Naive thymus-derived CD8-positive, alpha-beta T cell (primary cell): ENCODE measurements at regions of chr4 and their contacts with region 1.

Region 1: GRCh38 chr4:109559983-109560686 is at the start of gene MCUB:
- DNase-seq: peak; percentile 84 to 96 (median 92)
- ATAC-seq: peak; percentile 88 to 95
- H3K4me3 Mint-ChIP-seq: peak within 1 kb of the TSS; percentile 84 to 99 (median 98)
- H3K27ac Mint-ChIP-seq: peak within 1 kb of the TSS; percentile 94 to 99 (median 97)
- H3K4me1 Mint-ChIP-seq: peaks cover 12 to 62% (median 58%) of the 10 kb centered on the region in 4 donors
- H3K27me3 Mint-ChIP-seq: no peaks in the 10 kb centered on the region
- polyA plus RNA-seq, gene MCUB: 160 to 201 (median 197) TPM

Region 2: DNA sequence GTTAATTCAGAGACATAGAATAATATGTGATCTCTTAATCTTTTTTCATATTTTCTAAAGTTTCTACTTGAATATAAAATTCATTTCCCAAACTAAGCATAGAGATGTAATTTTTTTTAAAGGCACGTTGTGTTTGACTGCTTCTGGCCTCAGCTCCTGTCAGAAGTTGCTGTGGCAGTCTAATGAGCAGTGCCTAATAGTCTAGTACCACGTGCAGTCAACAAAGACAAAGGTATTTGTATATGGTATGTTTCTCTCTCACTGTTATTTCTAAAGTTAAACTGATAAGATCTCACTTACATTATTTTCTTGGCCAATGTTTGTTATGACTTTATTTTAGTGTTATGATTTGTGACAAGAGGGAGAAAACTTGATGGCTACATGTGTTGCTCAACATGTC is 48.7 kb before region 1 on chr4:
- POLR2A ChIA-PET with region 1: interaction called, 11 read pairs
- DNase-seq: no peak
- ATAC-seq: no peak
- H3K4me3 Mint-ChIP-seq: no peak overlapping the region
- H3K27ac Mint-ChIP-seq: no peak overlapping the region
- H3K4me1 Mint-ChIP-seq: no peaks in the 10 kb centered on the region
- H3K27me3 Mint-ChIP-seq: no peaks in the 10 kb centered on the region

Region 3: GRCh38 chr4:109574102-109574850 is 14.1 kb after region 1 on chr4:
- POLR2A ChIA-PET with region 1: interaction called, 15 read pairs
- DNase-seq: peak in 3 of 10 donors; percentile 32 to 48 (median 32)
- ATAC-seq: peak; percentile 73 to 77
- H3K4me3 Mint-ChIP-seq: peak overlapping the region in 9 of 10 donors; percentile 3 to 78 (median 62)
- H3K27ac Mint-ChIP-seq: peak overlapping the region; percentile 42 to 90 (median 73)
- H3K4me1 Mint-ChIP-seq: peaks cover 39 to 79% (median 74%) of the 10 kb centered on the region in 4 donors
- H3K27me3 Mint-ChIP-seq: no peaks in the 10 kb centered on the region

Region 4: DNA sequence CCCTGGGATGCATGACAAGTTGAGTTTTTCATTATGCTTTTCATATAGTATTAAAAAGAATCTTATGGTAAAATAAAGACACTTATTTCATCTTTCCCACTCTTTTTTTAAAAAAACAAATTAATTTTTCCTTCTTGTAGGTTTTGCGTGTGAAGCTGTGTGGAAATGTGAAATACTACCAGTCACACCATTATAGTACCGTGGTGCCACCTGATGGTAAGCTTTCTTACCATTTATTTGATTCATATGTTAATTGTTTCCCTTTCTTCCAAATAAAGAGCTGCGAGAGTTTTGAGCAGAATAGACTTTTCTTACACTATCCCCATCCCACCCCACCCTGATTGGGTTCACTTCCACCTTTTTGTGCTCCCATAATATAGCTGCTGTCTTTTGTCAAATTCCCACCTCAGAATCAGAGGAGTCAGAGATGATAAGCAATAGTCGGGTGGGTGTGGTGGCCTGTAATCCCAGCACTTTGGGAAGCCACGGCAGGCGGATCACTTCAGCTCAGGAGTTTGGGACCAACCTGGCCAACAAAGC is 98.8 kb after region 1 on chr4:
- POLR2A ChIA-PET with region 1: interaction called, 14 read pairs
- DNase-seq: peak in 3 of 10 donors; percentile 24 to 39 (median 37)
- ATAC-seq: peak in 1 of 2 donors; percentile 43
- H3K4me3 Mint-ChIP-seq: peak overlapping the region in 2 of 10 donors; percentile 27 to 34
- H3K27ac Mint-ChIP-seq: peak overlapping the region in 8 of 10 donors; percentile 66 to 91 (median 82)
- H3K4me1 Mint-ChIP-seq: peaks cover 5 to 67% (median 32%) of the 10 kb centered on the region in 4 donors
- H3K27me3 Mint-ChIP-seq: no peaks in the 10 kb centered on the region

Region 5: DNA sequence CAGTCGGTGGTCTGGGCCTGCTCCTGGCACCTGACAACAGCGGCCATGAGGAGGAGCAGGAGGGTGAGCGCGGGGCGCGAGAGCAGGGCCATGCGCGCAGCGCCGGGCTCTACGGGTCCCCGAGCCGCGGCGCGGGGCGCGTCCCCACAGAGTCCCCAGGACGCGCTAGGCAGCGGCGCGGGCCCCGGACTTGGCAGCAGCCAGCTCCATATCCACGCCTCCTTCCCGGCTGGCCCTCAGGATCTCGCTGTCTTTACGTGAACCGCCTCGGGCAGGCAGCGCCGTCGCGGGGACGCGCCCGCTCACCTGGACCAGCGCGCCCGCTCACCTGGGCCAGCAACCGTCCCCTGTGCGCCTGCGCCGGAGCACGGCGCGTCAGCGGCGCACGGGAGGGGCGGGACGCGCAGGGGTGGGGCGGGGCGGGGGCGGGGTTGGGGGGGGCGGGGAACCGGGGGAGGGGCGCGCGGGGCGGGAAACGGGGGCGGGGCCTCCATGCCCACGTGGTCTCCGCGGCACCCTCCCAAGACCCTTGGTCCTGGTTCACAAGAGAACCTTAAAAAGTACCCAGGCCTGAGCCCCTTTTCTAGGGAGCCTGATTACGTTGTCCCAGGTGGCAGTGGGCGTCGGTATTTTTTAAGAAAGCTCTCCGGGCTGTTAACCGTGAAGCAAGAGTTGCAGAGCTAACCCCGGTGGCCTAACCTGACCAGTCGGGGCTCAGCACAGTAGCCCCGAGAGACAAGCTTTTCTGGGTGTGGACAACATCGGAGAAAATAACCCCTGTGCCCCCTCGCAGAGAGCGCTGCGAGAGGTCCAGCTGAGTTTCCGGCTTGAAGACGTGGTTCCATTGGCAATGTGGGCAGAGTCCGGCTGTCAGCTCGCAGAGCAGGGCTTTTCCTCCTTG is 169.8 kb after region 1 on chr4 and contains the start of gene PLA2G12A:
- POLR2A ChIA-PET with region 1: interaction called, 10 read pairs
- DNase-seq: peak; percentile 72 to 90 (median 84)
- ATAC-seq: peak; percentile 85 to 89
- H3K4me3 Mint-ChIP-seq: peak within 1 kb of the TSS; percentile 82 to 97 (median 92)
- H3K27ac Mint-ChIP-seq: peak within 1 kb of the TSS; percentile 74 to 97 (median 93)
- H3K4me1 Mint-ChIP-seq: peaks cover 19 to 38% (median 25%) of the 10 kb centered on the region in 4 donors
- H3K27me3 Mint-ChIP-seq: no peaks in the 10 kb centered on the region
- polyA plus RNA-seq, gene PLA2G12A: 51.6 to 56.9 (median 53.7) TPM